ENCODE measurements at regions of chr6 and their contacts with region 1.

Region 1: DNA sequence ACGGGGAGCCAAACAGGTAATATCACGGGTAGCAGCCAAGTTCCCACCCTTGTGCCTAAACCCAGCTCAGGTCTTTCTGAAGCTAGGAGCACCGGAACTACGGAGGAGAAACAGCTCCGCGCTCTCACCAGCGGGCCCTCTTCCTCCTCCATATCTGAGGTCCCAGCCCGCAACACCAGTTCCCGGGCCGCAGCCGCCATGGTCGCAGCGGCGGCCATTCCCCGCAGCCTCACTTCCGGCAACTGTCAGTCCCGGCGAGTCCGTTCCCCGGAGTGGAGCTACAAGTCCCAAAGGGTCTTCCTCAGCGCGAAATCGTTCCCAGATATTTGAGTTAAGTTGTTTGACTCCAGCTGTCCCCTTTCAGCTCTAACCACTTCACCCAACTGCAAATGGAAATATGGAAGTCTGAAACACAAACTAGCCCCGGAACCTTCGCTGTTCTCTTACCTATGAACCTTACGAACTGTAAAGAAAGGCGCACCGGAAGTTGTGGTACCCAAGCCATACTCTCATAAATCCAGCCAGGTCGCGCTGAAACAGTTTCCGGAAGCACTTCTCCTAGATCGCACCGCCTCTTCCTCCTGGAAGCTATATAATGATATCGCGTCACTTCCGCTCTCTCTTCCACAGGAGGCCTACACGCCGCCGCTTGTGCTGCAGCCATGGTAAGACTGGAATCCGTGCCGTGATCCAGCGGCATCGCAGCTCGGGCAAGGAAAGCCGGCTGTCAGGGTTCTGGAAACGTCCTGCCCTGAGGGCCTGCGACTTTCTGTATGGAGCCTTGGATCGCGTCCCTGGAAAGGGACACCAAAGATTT is at the starts of genes RPS18 and VPS52:
- DNase-seq: peak; percentile 79
- ATAC-seq: peak; percentile 84
- H3K4me3 Mint-ChIP-seq: peak within 1 kb of the TSS; percentile 100
- H3K27ac Mint-ChIP-seq: peak within 1 kb of the TSS; percentile 100
- H3K4me1 Mint-ChIP-seq: peaks cover 59% of the 10 kb centered on the region
- H3K27me3 Mint-ChIP-seq: no peaks in the 10 kb centered on the region
- CTCF ChIP-seq: no peak
- total RNA-seq, gene RPS18: 4,710 and 5,877 TPM in 2 replicates
- total RNA-seq, gene VPS52: 82.0 and 97.2 TPM in 2 replicates

Region 2: DNA sequence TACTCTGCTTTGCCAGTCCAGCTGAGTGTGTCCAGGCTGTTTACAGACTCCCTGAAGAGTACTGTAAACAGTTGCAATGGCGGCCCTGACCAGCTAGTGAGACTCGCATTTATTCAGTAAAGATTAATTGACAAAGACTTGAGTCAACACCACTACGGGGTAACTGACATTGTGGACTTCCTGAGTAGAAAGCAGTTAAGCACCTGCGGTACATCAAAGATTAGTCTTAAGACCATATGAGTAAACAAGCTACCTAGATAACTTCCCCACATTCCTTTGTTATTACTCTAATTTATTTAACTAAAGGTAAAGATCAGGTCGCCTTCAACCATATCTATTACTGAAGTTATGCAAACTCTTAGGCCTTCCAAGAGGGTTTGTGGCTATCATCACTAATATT is 12.6 kb before region 1 on chr6:
- CTCF ChIA-PET with region 1: interaction called, 3 read pairs
- POLR2A ChIA-PET with region 1: interaction called, 10 read pairs
- intact Hi-C with region 1: no loop called
- DNase-seq: no peak
- ATAC-seq: no peak
- H3K4me3 Mint-ChIP-seq: no peak overlapping the region
- H3K27ac Mint-ChIP-seq: no peak overlapping the region
- H3K4me1 Mint-ChIP-seq: no peaks in the 10 kb centered on the region
- H3K27me3 Mint-ChIP-seq: no peaks in the 10 kb centered on the region
- CTCF ChIP-seq: no peak

Region 3: GRCh38 chr6:33299237-33299944 is 27.7 kb after region 1 on chr6:
- CTCF ChIA-PET with region 1: interaction called, 13 read pairs
- POLR2A ChIA-PET with region 1: interaction called, 54 read pairs
- intact Hi-C with region 1: loop called (anchors 1 kb)
- DNase-seq: peak; percentile 90
- ATAC-seq: peak; percentile 67
- H3K4me3 Mint-ChIP-seq: peak overlapping the region; percentile 96
- H3K27ac Mint-ChIP-seq: peak overlapping the region; percentile 98
- H3K4me1 Mint-ChIP-seq: peaks cover 34% of the 10 kb centered on the region
- H3K27me3 Mint-ChIP-seq: no peaks in the 10 kb centered on the region
- CTCF ChIP-seq: no peak

Region 4: GRCh38 chr6:33344701-33345697 is 73.3 kb after region 1 on chr6:
- CTCF ChIA-PET with region 1: interaction called, 19 read pairs
- POLR2A ChIA-PET with region 1: interaction called, 36 read pairs
- intact Hi-C with region 1: no loop called
- DNase-seq: peak; percentile 31
- ATAC-seq: peak; percentile 35
- H3K4me3 Mint-ChIP-seq: peak overlapping the region; percentile 80
- H3K27ac Mint-ChIP-seq: peak overlapping the region; percentile 92
- H3K4me1 Mint-ChIP-seq: peaks cover 35% of the 10 kb centered on the region
- H3K27me3 Mint-ChIP-seq: no peaks in the 10 kb centered on the region
- CTCF ChIP-seq: no peak

Region 5: GRCh38 chr6:33417903-33418689 is 146.4 kb after region 1 on chr6 and contains the start of gene CUTA:
- CTCF ChIA-PET with region 1: no interaction called
- POLR2A ChIA-PET with region 1: interaction called, 13 read pairs
- intact Hi-C with region 1: loop called (anchors 1 kb)
- DNase-seq: peak; percentile 92
- ATAC-seq: peak; percentile 90
- H3K4me3 Mint-ChIP-seq: peak within 1 kb of the TSS; percentile 91
- H3K27ac Mint-ChIP-seq: peak within 1 kb of the TSS; percentile 96
- H3K4me1 Mint-ChIP-seq: peaks cover 66% of the 10 kb centered on the region
- H3K27me3 Mint-ChIP-seq: no peaks in the 10 kb centered on the region
- CTCF ChIP-seq: no peak
- total RNA-seq, gene CUTA: 111 and 120 TPM in 2 replicates